ENCODE measurements at regions of chr4 and their contacts with region 1.

Region 1: GRCh38 chr4:145234091-145234706 is 53.8 kb upstream of the OTUD4 start:
- DNase-seq: no peak
- H3K4me3 ChIP-seq: no peak overlapping the region
- H3K27ac ChIP-seq: no peak overlapping the region
- H3K4me1 ChIP-seq: peaks cover 0 to 5% (median 0%) of the 10 kb centered on the region in 6 donors
- H3K27me3 ChIP-seq: no peaks in the 10 kb centered on the region
- CTCF ChIP-seq: peak; percentile 44 to 77 (median 66)
- POLR2A ChIP-seq: no peak

Region 2: DNA sequence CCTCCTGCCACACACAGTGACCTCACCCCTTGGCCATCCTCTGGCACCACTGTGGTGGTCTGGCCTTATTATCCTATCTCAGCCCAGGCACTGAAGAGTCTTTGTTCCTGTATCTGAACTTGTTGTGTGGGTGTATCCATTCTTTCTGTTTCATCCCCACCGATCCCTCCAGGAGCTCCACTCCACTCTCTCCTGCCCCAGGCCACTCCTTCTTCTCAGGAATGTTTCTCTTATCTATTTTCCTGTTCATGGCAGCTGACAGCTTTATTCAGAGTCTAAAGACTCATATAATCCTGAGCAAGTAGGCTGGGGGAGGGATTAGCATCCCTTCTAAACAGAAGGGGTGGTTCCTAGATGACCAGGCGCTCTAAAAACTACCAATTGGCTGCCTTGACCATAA is 286.2 kb before region 1 on chr4:
- intact Hi-C with region 1: no loop called
- DNase-seq: no peak
- H3K4me3 ChIP-seq: no peak overlapping the region
- H3K27ac ChIP-seq: no peak overlapping the region
- H3K4me1 ChIP-seq: no peaks in the 10 kb centered on the region
- H3K27me3 ChIP-seq: no peaks in the 10 kb centered on the region
- CTCF ChIP-seq: no peak
- POLR2A ChIP-seq: no peak

Region 3: DNA sequence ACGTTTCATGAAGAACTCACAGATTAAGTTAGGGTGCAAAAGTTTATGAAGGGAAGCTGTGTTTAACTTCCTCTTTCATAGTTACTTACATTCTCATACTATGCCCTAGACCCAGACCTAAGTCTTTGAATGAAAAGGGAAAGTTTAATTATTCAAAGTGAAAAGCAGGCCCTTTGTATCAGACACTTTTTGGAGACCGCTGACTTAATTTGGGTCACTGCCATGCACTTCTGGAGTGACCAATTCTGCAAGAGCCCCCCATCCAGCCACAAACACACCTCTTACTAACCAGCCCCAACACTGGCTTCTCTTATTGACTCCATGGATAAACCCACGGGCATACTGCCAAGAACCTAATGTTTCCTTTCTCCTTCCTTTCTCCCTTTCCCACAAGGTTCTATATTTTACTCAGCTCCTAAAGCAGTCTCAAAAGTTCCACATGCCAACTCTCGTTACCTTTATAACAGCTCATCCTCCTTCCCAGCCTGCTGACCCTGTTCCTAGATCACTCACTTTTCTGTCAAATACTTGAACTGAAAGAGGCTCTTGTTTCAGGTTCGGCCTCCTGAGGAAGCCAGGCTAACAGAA is 101.6 kb before region 1 on chr4:
- intact Hi-C with region 1: no loop called
- DNase-seq: no peak
- H3K4me3 ChIP-seq: no peak overlapping the region
- H3K27ac ChIP-seq: peak overlapping the region in 4 of 8 donors; percentile 29 to 50 (median 44)
- H3K4me1 ChIP-seq: peaks cover 5 to 37% (median 16%) of the 10 kb centered on the region in 6 donors
- H3K27me3 ChIP-seq: no peaks in the 10 kb centered on the region
- CTCF ChIP-seq: no peak
- POLR2A ChIP-seq: no peak

Region 4: GRCh38 chr4:145481164-145481941 is 247.2 kb after region 1 on chr4 and contains the start of gene SMAD1:
- intact Hi-C with region 1: no loop called
- DNase-seq: peak; percentile 87
- H3K4me3 ChIP-seq: peak within 1 kb of the TSS; percentile 61 to 87 (median 82)
- H3K27ac ChIP-seq: peak within 1 kb of the TSS; percentile 80 to 96 (median 94)
- H3K4me1 ChIP-seq: peaks cover 0 to 69% (median 33%) of the 10 kb centered on the region in 6 donors
- H3K27me3 ChIP-seq: peaks cover 0 to 82% (median 12%) of the 10 kb centered on the region in 7 donors
- CTCF ChIP-seq: no peak
- POLR2A ChIP-seq: no peak
- total RNA-seq, gene SMAD1: 20.4 to 48.2 (median 32.0) TPM

Region 5: GRCh38 chr4:145557720-145558119 is 323.5 kb after region 1 on chr4:
- intact Hi-C with region 1: loop called (anchors 5 kb)
- DNase-seq: peak; percentile 74
- H3K4me3 ChIP-seq: no peak overlapping the region
- H3K27ac ChIP-seq: no peak overlapping the region
- H3K4me1 ChIP-seq: peaks cover 0 to under 1% (median 0%) of the 10 kb centered on the region in 6 donors
- H3K27me3 ChIP-seq: no peaks in the 10 kb centered on the region
- CTCF ChIP-seq: peak; percentile 54 to 87 (median 79)
- POLR2A ChIP-seq: no peak

Region 6: GRCh38 chr4:145609481-145610427 is 375.6 kb after region 1 on chr4:
- intact Hi-C with region 1: loop called (anchors 5 kb)
- DNase-seq: no peak
- H3K4me3 ChIP-seq: no peak overlapping the region
- H3K27ac ChIP-seq: no peak overlapping the region
- H3K4me1 ChIP-seq: peaks cover 0 to 6% (median 0%) of the 10 kb centered on the region in 6 donors
- H3K27me3 ChIP-seq: no peaks in the 10 kb centered on the region
- CTCF ChIP-seq: peak; percentile 34 to 77 (median 64)
- POLR2A ChIP-seq: no peak